GM13977 (cell line): ENCODE measurements at regions of chr1 and their contacts with region 1.

Region 1: GRCh38 chr1:47710329-47711071 is 272.7 kb downstream of the FOXD2 start:
- DNase-seq: peak; percentile 95
- CTCF ChIP-seq: peak; percentile 99

Region 2: DNA sequence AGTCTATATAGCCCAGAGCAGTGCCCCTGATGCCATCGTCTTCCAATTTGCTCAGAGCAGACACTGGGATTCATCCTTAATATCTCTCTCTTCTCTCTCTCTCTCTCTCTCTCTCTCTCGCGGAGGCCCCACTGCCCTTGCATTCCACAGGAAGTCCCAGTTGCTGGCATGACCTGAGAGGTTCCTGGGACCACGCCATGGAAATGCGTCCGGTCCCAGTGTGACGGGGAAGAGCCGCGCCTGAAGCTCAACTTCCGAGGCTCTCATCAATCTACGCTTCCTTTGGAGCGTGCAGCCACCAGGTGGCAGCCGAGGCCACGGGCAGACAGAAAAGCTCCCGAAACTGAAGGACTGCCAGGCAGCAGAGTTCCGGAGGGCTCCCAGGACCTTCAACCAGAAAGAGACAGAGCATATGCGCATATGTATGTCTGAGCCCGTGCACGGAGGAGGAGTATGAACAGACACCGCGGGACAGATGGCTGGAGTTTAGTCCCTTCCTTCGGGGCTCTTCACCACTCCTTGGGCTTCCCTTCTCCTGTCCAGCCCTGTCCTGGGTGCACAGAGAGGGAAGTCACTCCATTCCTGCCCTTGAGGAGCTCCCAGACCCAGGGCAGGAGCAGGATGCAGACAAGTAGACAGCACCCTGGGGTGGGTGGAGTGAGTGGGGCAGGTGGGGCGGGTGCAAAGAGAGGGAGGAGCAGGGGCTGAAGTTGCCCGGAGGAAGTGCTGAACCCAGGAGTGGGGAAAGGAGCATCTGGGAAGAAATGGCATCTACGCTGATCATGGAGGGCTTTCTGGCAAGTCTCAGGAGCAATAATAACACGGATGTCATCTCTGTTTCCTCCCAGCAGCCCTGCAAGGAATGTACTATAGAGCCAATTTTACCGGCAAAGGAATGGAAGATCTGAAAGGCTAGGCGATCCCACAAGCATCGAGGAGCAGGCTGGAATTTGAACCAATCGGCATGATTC is 531.2 kb before region 1 on chr1:
- in situ Hi-C with region 1: loop called (anchors 25 kb)
- DNase-seq: peak; percentile 88
- CTCF ChIP-seq: peak; percentile 95

Region 3: DNA sequence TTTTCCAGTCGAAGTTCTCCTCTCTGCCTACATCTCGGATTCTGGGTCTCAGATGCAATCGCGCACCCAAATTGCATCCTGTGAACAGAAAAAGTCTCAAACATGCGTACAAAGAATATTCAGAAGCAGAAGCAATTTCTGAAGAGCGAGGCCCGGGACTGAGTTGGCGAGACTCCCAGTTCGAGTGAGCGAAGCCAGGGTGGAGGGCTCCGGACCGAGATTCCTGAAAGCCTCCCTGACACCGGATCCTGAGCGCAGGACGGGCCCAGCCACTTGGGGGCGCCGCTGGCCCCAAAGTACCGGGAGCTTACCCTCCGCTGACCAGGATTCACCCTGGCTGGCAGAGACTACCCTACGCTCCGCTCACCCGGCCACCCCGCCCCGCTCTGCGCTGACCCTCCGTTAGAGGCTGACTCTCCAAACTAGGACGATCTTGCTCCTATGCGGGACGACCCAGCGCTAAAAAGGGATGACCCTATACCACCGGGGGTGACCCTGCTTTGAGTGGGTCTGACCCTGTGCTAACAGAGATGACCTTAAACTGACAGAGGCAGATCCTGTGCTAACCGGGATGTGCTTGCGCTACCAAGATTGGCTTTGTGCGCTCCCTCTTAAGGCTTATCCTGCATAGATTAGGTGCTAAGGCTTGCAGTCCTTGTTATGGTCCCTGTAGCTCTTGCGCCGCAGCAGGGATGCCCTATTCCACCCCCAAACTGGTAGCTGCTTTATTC is 260.5 kb before region 1 on chr1:
- in situ Hi-C with region 1: loop called (anchors 10 kb)
- DNase-seq: no peak
- CTCF ChIP-seq: peak; percentile 63

Region 4: DNA sequence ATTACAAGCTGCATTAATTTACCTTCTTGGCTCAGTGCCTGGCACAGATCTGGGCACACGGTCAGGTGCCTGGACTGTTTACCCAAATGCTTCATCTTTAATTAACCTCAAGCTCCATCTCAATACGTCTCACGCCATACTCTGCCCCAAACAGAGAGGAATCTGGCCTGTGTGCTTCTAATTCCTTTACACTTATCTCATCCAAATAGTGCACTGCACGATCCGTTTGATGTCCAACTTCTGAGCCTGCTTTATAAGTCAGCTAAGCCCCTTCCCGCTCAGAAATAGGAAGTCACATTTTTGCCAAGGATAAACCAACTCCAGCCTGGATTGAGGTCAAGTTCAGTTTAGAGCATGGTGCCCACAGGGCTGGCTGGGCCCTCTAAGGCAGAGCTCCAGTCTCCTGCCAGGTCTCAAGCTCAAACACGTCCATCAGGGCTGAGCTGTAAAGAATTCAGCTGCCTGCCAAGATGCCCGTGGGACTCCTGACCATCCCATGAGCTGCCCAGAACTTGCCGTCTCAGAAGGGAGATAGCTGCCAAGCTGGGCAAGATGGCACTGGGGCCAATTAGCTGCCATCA is 53.2 kb after region 1 on chr1:
- in situ Hi-C with region 1: no loop called
- DNase-seq: no peak
- CTCF ChIP-seq: no peak

Region 5: GRCh38 chr1:47785561-47786271 is 75.2 kb after region 1 on chr1:
- in situ Hi-C with region 1: no loop called
- DNase-seq: no peak
- CTCF ChIP-seq: no peak